A549 (cell line): ENCODE measurements at regions of chr17 and their contacts with region 1.

Region 1: DNA sequence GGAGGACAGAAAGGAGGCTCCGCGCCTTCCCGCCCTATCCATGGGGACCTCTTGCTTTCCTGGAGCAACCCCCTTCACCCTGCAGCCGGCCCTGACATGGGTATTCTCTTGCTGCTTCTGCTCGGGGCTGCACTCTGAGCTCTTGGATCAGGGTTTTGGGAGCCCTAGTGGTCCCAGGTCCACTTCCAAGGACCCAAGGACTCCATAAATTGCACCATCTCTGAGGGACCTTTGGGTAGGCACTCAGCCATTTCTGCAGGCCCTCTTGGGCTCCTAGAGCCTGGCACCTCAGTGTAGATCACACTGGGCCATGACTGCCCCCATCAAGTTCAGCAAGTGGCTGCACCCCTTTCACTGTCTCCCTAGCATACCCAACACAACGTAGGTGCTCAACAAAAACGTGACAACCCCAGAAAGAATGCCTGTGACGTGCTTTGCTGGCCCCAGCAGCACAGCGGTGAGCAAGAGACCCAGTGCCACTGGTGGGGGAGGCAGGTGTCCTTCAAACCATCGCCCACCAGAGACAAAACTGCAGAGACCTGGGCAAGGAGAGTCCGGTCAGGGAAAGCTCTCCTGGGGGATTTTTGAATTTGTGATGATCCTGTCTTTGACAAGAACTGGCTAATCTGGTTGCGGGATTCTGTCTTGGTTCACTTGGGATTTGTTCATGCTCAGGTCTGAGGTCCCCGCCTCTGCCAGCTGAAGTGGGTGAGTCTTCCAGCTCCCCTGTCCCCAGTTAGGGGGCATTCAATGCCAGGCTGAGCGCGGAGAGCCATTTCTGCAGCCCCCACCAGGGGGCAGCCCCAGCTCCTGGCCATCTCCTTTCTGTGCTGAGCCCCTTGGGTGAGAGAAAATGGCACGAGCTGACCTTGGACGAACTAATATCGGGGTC is 2.5 kb upstream of the RAB11FIP4 start:
- DNase-seq: peak in 1 of 2 experiments; percentile 82
- ATAC-seq: peak; percentile 57 to 80
- H3K4me3 ChIP-seq: no peak overlapping the region
- H3K27ac ChIP-seq: no peak overlapping the region
- H3K4me1 ChIP-seq: no peaks in the 10 kb centered on the region
- CTCF ChIP-seq: peak; percentile 72
- EP300 ChIP-seq: no peak
- POLR2A ChIP-seq: no peak
- RAD21 ChIP-seq: peak; percentile 64 to 70

Region 2: GRCh38 chr17:31349454-31349853 is 39.6 kb before region 1 on chr17:
- CTCF ChIA-PET with region 1: no interaction called
- POLR2A ChIA-PET with region 1: no interaction called
- DNase-seq: no peak
- ATAC-seq: no peak
- H3K4me3 ChIP-seq: no peak overlapping the region
- H3K27ac ChIP-seq: no peak overlapping the region
- H3K4me1 ChIP-seq: no peaks in the 10 kb centered on the region
- CTCF ChIP-seq: no peak
- EP300 ChIP-seq: no peak
- POLR2A ChIP-seq: no peak
- RAD21 ChIP-seq: no peak

Region 3: DNA sequence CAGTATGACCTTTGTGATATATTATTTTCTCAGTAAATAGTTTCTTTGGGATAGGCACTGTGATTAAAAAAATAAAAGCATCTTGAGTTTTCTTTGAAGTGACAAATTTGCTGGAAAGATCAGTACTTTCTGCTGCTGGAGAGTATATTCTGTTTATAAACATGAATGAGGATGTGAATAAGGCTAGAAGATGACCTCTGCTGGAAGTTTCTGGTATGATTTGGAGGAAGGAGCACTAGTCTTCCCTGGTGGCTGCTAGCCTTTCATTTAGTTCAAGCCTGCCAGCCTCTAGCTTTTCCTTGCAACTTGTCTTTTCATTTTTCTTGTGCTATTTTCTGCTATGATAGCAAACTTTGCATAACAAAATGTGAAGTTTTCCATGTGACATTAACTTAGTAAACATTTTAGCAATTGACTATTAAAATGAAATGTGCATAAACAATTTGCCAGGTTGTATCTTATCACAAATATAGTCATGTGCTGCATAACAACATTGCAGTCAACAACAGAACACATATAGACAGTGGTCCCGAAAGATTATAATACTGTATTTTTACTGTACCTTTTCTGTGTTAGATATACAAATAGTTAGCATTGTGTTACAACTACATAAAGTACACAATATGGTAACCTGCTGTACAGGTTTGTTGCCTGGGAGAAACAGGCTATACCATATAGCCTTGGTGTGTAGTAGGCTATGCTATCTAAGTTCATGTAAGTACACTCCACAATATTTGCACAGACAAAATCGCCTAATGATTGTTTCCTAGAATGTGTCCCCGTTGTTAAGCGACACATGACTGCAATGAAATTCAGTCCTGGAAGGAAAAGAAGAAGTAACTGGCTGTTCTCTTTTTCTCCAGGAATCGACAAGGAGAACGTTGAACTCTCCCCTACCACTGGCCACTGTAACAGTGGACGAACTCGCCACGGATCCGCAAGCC is 15.6 kb before region 1 on chr17:
- CTCF ChIA-PET with region 1: interaction called, 40 read pairs
- POLR2A ChIA-PET with region 1: no interaction called
- DNase-seq: peak in 1 of 2 experiments; percentile 72
- ATAC-seq: peak; percentile 96 to 98
- H3K4me3 ChIP-seq: no peak overlapping the region
- H3K27ac ChIP-seq: no peak overlapping the region
- H3K4me1 ChIP-seq: 0 out of 3 replicates have a peak, but pooled peaks cover 4% of the 10 kb centered on the region
- CTCF ChIP-seq: peak; percentile 76
- EP300 ChIP-seq: no peak
- POLR2A ChIP-seq: no peak
- RAD21 ChIP-seq: peak; percentile 69 to 77

Region 4: DNA sequence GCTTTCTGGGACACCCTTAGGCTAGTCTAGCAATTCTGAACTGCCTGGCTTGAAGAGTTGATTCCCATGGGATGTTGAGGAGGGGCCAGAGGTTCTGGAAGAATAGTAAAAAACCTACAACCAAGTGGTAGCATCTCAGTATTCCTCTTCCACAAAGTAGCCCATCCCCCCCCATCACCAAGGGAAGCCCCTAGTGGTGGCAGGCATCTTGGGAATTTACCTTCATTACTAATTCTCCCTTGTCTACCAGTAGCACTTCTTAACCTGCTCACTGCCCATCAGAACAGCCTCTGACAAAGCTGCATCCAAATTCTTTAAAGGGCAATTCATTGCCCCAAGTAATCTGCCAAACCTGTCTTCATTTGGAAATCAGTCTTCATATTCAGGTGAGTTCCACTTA is 10.4 kb before region 1 on chr17:
- CTCF ChIA-PET with region 1: interaction called, 40 read pairs
- POLR2A ChIA-PET with region 1: interaction called, 3 read pairs
- DNase-seq: no peak
- ATAC-seq: peak; percentile 12 to 63; a peak in 3 of 6 replicates
- H3K4me3 ChIP-seq: no peak overlapping the region
- H3K27ac ChIP-seq: no peak overlapping the region
- H3K4me1 ChIP-seq: no peaks in the 10 kb centered on the region
- CTCF ChIP-seq: no peak
- EP300 ChIP-seq: no peak
- POLR2A ChIP-seq: no peak
- RAD21 ChIP-seq: no peak

Region 5: GRCh38 chr17:31508288-31509094 is 119.5 kb after region 1 on chr17:
- CTCF ChIA-PET with region 1: interaction called, 10 read pairs
- POLR2A ChIA-PET with region 1: no interaction called
- DNase-seq: peak; percentile 31 to 41
- ATAC-seq: peak; percentile 56 to 82; a peak in 4 of 6 replicates
- H3K4me3 ChIP-seq: no peak overlapping the region
- H3K27ac ChIP-seq: no peak overlapping the region
- H3K4me1 ChIP-seq: no peaks in the 10 kb centered on the region
- CTCF ChIP-seq: no peak
- EP300 ChIP-seq: no peak
- POLR2A ChIP-seq: no peak
- RAD21 ChIP-seq: no peak

Region 6: DNA sequence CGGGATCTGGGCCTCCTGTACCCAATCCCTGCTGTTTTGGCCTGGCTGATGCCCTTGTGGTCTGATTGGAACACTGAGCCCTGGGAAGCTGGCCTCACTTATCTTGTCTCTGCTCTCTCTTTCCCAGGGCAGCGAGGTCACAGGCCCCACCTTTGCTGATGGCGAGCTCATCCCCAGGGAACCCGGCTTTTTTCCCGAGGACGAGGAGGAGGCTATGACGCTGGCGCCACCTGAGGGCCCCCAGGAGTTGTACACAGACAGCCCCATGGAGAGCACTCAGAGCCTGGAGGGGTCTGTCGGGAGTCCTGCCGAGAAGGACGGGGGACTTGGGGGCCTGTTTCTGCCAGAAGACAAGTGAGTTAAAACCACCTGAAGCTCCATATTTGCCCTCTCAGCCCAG is 128.5 kb after region 1 on chr17:
- CTCF ChIA-PET with region 1: interaction called, 197 read pairs
- POLR2A ChIA-PET with region 1: no interaction called
- DNase-seq: peak in 1 of 2 experiments; percentile 34
- ATAC-seq: peak; percentile 51 to 78; a peak in 4 of 6 replicates
- H3K4me3 ChIP-seq: no peak overlapping the region
- H3K27ac ChIP-seq: no peak overlapping the region
- H3K4me1 ChIP-seq: no peaks in the 10 kb centered on the region
- CTCF ChIP-seq: peak; percentile 35; the same call in 2 of the 3 replicates
- EP300 ChIP-seq: no peak
- POLR2A ChIP-seq: no peak
- RAD21 ChIP-seq: peak; percentile 57 to 69